AG04450 (cell line): ENCODE measurements at regions of chr7 and their contacts with region 1.

Region 1: GRCh38 chr7:151123822-151124464 is 37.7 kb downstream of the AGAP3 start:
- DNase-seq: peak; percentile 33
- H3K4me3 ChIP-seq: no peak overlapping the region
- H3K27ac ChIP-seq: no peak overlapping the region
- H3K27me3 ChIP-seq: no peaks in the 10 kb centered on the region
- CTCF ChIP-seq: peak; percentile 99

Region 2: GRCh38 chr7:151051108-151051507 is 72.8 kb before region 1 on chr7:
- CTCF ChIA-PET with region 1: no interaction called
- POLR2A ChIA-PET with region 1: no interaction called
- DNase-seq: no peak
- H3K4me3 ChIP-seq: no peak overlapping the region
- H3K27ac ChIP-seq: no peak overlapping the region
- H3K27me3 ChIP-seq: peaks cover 5% of the 10 kb centered on the region
- CTCF ChIP-seq: no peak

Region 3: DNA sequence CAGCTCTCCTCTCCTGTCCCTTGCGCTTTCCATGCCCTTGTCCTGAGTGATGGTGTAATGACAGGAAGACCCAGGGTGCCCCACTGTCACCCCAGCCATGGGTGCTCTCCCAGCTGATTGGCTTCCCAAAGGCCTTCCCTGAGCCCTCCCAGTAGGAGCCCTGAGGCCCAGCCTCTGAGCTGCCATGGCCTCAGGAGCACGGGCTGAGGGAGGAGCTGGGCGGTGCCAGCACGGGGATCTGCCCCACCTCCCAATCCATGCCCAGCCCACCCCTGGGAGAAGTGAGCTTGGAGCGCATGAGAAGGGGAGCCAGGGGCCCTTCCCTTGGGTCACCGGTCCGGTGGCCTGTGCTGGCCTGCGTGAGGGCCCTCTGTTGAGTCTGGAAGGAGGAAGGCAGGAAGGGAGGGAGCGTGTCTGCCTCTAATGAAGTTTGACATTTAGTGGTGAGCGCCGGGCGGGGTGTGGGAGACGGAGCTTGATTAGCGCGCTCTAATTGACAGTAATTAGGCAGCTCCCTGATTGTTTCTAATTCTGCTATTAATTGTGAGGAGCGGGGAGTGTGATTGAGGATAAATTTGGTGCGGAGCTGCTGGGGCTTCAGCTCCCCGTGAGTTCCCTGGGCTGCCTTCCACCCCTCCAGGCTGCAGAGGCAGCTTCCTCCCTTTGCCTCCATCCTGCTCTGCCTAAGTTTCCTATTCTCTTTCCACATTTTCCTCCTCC is 15.3 kb after region 1 on chr7:
- CTCF ChIA-PET with region 1: interaction called, 10 read pairs
- POLR2A ChIA-PET with region 1: no interaction called
- DNase-seq: no peak
- H3K4me3 ChIP-seq: no peak overlapping the region
- H3K27ac ChIP-seq: no peak overlapping the region
- H3K27me3 ChIP-seq: no peaks in the 10 kb centered on the region
- CTCF ChIP-seq: no peak

Region 4: GRCh38 chr7:151172273-151173141 is 48.6 kb after region 1 on chr7:
- CTCF ChIA-PET with region 1: interaction called, 11 read pairs
- POLR2A ChIA-PET with region 1: no interaction called
- DNase-seq: peak; percentile 13
- H3K4me3 ChIP-seq: no peak overlapping the region
- H3K27ac ChIP-seq: no peak overlapping the region
- H3K27me3 ChIP-seq: peaks cover 54% of the 10 kb centered on the region
- CTCF ChIP-seq: peak; percentile 100

Region 5: GRCh38 chr7:151719031-151719430 is 595.1 kb after region 1 on chr7:
- CTCF ChIA-PET with region 1: interaction called, 10 read pairs
- POLR2A ChIA-PET with region 1: no interaction called
- DNase-seq: no peak
- H3K4me3 ChIP-seq: no peak overlapping the region
- H3K27ac ChIP-seq: no peak overlapping the region
- H3K27me3 ChIP-seq: no peaks in the 10 kb centered on the region
- CTCF ChIP-seq: no peak